Vagina (tissue), 2 donors: ENCODE measurements at regions of chr2 and their contacts with region 1.

Region 1: GRCh38 chr2:46067851-46068305 is 229.3 kb upstream of the EPAS1 start:
- DNase-seq: no peak
- H3K4me3 ChIP-seq: no peak overlapping the region
- H3K27ac ChIP-seq: no peak overlapping the region
- H3K4me1 ChIP-seq: peaks cover 11% of the 10 kb centered on the region
- H3K27me3 ChIP-seq: no peaks in the 10 kb centered on the region
- CTCF ChIP-seq: no peak
- POLR2A ChIP-seq: no peak

Region 2: DNA sequence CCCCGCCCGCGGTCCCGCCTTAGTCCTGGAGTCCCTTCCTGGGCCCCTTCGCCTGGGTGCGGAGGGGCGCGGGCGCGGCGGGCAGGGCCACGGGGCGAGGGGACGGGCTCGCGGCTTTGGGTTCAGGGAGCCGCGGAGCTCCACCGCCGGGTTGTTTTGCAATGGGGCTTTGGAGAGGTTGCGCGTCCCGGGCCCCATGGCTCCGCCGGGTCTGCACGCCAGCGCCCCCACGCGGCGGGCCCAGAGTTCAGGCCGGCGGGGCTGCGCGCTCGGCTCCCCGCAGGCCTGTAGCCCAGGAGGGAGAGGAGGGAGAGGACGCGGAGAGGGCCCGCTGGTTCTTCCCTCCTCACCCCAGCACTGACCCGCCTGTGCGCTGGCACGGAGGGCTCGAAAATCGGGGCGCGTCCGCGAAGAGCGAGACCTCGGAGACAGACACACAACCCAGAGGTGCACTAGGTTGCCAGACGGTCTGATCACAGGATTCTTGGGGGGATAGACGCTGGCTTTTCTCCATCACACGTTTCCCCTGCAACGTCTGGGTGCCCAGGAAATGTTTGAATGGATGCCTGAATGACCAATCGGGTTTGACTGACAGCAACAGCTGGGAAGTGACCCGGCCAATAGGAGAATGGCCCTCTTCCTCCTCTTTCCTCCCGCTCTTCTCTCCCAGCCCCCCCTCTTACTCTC is 1053.7 kb before region 1 on chr2:
- intact Hi-C with region 1: no loop called
- DNase-seq: no peak
- H3K4me3 ChIP-seq: peak overlapping the region; percentile 46 to 47
- H3K27ac ChIP-seq: peak overlapping the region; percentile 89
- H3K4me1 ChIP-seq: peaks cover 41% of the 10 kb centered on the region
- H3K27me3 ChIP-seq: no peaks in the 10 kb centered on the region
- CTCF ChIP-seq: peak; percentile 45 to 82 (median 67)
- POLR2A ChIP-seq: no peak

Region 3: DNA sequence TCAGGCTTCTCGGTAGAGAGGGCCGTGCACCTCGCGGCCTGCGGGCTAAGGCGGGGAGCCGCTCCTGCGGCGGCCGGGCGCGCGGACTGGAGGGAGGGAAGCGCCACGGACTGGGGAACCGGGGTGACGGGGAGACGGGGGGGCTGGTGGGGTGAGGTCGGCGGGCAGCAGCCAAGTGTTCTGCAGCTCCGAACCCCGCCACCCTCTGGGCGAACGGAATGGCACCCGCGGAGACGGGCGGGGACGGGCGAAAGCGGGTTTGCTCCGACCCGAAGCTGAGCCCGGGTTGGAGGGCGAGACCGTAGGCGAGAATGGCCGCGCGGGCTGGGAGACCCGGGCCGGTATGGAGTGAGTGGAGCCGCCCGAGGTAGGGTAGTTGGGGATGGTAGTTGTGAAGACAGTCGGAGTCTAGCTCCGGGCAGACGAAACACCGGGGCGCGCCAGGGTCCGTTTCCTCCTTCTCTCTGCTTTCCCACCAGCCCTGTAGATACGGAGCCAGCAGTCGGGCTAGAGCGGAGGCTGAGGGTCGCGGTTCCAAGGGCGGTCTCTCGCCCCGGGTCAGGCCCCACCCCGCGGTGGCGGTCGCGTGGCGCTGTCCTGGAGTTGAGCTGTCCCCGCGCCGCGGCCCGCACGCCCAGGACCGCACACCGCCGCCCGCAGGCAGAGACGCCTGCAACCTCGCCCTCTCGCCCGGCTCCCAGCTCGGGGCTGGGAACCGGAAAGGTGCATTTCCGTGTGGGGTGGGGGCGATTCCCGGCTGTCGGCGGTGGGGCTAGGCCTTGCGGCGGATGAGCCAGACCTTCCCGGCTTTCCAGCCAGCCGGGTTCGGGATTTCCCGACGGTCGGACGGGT is 898.3 kb before region 1 on chr2:
- intact Hi-C with region 1: no loop called
- DNase-seq: no peak
- H3K4me3 ChIP-seq: peak overlapping the region; percentile 51
- H3K27ac ChIP-seq: peak overlapping the region; percentile 92
- H3K4me1 ChIP-seq: peaks cover 19% of the 10 kb centered on the region
- H3K27me3 ChIP-seq: no peaks in the 10 kb centered on the region
- CTCF ChIP-seq: no peak
- POLR2A ChIP-seq: no peak

Region 4: GRCh38 chr2:46876741-46877384 is 809.0 kb after region 1 on chr2:
- intact Hi-C with region 1: loop called (anchors 5 kb)
- DNase-seq: no peak
- H3K4me3 ChIP-seq: no peak overlapping the region
- H3K27ac ChIP-seq: peak overlapping the region; percentile 36
- H3K4me1 ChIP-seq: peaks cover 63% of the 10 kb centered on the region
- H3K27me3 ChIP-seq: no peaks in the 10 kb centered on the region
- CTCF ChIP-seq: peak; percentile 24 to 50 (median 38)
- POLR2A ChIP-seq: no peak